ENCODE measurements at regions of chr15 and their contacts with region 1.

Region 1: DNA sequence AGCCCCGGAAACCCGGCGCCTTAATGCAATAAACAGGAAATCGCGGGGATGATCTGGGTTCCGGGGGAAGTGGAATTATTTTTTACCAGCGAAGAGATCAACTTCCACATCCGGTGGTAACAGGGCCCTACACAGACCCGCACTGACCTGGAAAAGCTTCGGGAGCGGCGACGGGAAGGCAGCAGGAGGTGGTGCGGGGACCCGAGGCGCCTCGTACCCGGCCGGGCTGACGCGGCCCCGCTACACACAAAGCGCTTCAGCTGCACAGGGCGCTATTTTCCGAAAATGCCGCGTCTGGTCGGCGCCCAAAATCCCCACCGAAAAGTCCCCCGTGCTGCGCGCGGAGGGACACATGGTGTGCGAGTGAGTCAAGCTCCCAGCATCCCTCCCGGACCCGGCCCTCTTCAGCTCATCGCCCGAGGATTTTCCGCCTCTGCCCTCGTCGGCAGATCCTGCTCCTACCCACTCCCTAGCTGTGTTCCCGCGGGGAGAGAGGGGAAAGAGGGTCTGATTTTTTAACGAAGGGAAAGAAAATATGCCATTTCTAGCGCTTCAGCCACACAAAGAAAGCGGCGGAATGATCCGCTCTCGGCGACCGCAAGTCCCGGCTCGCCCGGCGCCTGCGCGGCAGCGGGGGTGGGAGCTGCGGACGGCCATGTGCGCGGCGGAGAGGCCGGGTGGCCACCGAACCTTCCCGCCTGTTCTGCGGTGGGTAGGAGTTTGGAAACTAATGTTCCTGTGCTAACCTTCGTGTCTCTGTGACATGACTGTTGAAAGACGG is at the start of gene GABPB1:
- DNase-seq: peak; percentile 85 to 89
- H3K4me3 ChIP-seq: peak within 1 kb of the TSS; percentile 92 to 96 (median 93)
- H3K27ac ChIP-seq: peak within 1 kb of the TSS; percentile 98 to 99 (median 98)
- H3K4me1 ChIP-seq: peaks cover 36 to 43% of the 10 kb centered on the region in 2 donors
- H3K27me3 ChIP-seq: no peaks in the 10 kb centered on the region
- CTCF ChIP-seq: no peak
- POLR2A ChIP-seq: peak; percentile 28 to 71
- total RNA-seq, gene GABPB1: 22.2 to 30.0 (median 27.3) TPM

Region 2: GRCh38 chr15:50424066-50424890 is 69.2 kb after region 1 on chr15 and contains the start of gene USP8:
- intact Hi-C with region 1: loop called (anchors 5 kb)
- DNase-seq: peak; percentile 97 to 98
- H3K4me3 ChIP-seq: peak within 1 kb of the TSS; percentile 46 to 71 (median 66)
- H3K27ac ChIP-seq: peak within 1 kb of the TSS; percentile 84 to 92 (median 87)
- H3K4me1 ChIP-seq: peaks cover 10 to 15% of the 10 kb centered on the region in 2 donors
- H3K27me3 ChIP-seq: no peaks in the 10 kb centered on the region
- CTCF ChIP-seq: no peak
- POLR2A ChIP-seq: peak in 1 of 2 donors; percentile 91
- total RNA-seq, gene USP8: 62.8 to 89.6 (median 87.9) TPM

Region 3: DNA sequence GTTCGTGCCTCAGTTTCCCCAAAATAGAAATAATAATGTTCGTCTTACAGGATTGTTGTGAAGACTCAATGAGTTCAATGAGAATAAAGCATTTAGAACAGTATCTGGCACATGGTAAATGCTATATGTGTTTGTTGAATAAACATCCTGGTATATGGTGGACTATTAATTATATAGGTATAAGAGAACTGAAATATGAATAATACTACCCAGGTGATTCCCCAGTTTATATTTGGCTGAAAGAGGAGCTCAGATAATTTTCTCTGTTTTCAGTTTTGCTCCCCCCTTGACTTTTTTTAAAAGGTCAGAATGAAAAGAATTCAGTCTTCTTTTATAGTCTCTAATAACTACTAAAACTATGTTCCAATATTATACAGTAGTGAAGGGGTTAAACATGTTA is 116.0 kb after region 1 on chr15:
- intact Hi-C with region 1: no loop called
- DNase-seq: no peak
- H3K4me3 ChIP-seq: no peak overlapping the region
- H3K27ac ChIP-seq: no peak overlapping the region
- H3K4me1 ChIP-seq: no peaks in the 10 kb centered on the region
- H3K27me3 ChIP-seq: no peaks in the 10 kb centered on the region
- CTCF ChIP-seq: no peak
- POLR2A ChIP-seq: no peak

Measured in thyroid gland (tissue), 4 donors.